Activated T-helper 2 cell treated with anti-CD3 and anti-CD28 coated beads, Interferon-gamma antibody, Interleukin-2, Interleukin-4, amounts not matched to agents 10 μg/mL and 5 μg/mL and 100 μg/mL, durations not matched to agents 14 hours and 24 hours and 36 hours (primary cell): ENCODE measurements at regions of chr2 and their contacts with region 1.

Region 1: GRCh38 chr2:99559075-99559662 is 69.4 kb upstream of the REV1 start:
- DNase-seq: peak; percentile 67
- H3K4me3 Mint-ChIP-seq: no peak overlapping the region
- H3K27ac Mint-ChIP-seq: no peak overlapping the region
- H3K4me1 Mint-ChIP-seq: no peaks in the 10 kb centered on the region
- H3K27me3 Mint-ChIP-seq: peaks cover 11% of the 10 kb centered on the region

Region 2: GRCh38 chr2:99602475-99602874 is 43.3 kb after region 1 on chr2:
- intact Hi-C with region 1: no loop called
- DNase-seq: no peak
- H3K4me3 Mint-ChIP-seq: no peak overlapping the region
- H3K27ac Mint-ChIP-seq: no peak overlapping the region
- H3K4me1 Mint-ChIP-seq: no peaks in the 10 kb centered on the region
- H3K27me3 Mint-ChIP-seq: no peaks in the 10 kb centered on the region

Region 3: DNA sequence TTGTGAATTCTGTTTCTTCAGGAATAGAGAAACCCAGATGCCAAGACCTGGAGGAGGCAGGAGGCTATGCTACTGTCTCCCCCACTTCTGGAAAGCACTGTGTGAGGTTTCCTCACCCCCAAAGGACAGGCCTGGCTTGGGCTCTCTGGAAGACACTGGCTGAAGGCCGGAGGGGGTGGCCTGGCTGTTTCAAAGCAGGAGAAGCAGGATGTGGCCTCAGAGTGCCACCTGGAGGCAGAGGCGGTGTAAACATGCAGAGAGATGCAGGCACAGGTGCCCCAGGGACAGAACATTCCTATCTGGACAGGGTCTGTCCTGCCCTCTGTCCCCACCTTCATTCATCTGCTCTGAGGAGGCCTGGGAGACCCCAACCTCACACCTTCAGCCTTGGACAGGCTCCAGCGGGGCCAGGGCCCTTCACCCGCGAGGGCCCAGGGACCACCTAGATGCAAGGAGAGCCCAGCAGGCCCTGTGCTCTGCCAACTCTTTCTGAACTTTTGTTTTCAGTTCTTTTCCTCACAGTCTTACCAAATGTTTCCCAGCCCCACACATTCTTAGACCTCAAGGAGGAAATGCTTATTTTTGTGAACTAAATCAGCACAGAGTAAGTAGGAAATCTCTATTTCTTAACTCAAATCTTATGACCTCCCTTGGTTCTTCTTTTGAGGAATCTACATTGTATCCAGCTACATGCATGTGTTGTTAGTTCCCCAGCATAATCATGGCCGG is 683.9 kb after region 1 on chr2:
- intact Hi-C with region 1: loop called (anchors 1 kb)
- DNase-seq: peak; percentile 18
- H3K4me3 Mint-ChIP-seq: no peak overlapping the region
- H3K27ac Mint-ChIP-seq: no peak overlapping the region
- H3K4me1 Mint-ChIP-seq: no peaks in the 10 kb centered on the region
- H3K27me3 Mint-ChIP-seq: peaks cover 1% of the 10 kb centered on the region